ENCODE measurements at regions of chr19 and their contacts with region 1.

Region 1: GRCh38 chr19:2610637-2611482 is 91.6 kb downstream of the GNG7 start:
- H3K4me3 ChIP-seq: peak overlapping the region; percentile 35
- H3K27ac ChIP-seq: no peak overlapping the region
- H3K4me1 ChIP-seq: no peaks in the 10 kb centered on the region
- CTCF ChIP-seq: peak; percentile 95

Region 2: DNA sequence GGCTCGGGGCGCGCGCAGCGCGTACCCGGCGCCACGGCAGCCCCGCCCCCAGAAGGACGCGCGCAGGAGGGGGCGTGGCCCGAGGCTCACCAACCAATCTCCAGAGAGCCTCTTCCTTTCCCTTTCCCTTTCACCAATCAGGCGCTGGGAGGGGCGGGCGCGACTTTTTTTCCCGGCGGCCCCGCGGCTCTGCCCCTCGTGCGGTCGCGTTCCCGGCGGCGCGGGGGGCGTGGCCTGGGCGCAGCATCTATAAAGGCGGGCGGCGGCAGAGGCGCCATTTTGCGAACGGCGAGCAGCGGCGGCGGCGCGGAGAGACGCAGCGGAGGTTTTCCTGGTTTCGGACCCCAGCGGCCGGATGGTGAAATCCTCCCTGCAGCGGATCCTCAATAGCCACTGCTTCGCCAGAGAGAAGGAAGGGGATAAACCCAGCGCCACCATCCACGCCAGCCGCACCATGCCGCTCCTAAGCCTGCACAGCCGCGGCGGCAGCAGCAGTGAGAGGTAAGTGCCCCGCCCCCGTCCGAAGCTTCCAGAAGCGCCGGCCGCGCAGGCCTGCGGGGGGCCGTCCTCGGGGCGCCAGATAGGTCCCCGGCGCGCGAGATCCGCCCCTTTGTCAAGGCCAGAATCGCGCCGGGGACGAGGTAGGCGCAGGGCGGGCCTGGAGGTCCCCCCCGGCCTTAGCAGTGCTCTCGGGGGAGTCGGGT is 341.5 kb before region 1 on chr19:
- CTCF ChIA-PET with region 1: interaction called, 12 read pairs
- POLR2A ChIA-PET with region 1: no interaction called
- H3K4me3 ChIP-seq: peak overlapping the region; percentile 99
- H3K27ac ChIP-seq: peak overlapping the region; percentile 98
- H3K4me1 ChIP-seq: 0 out of 2 replicates have a peak, but pooled peaks cover 5% of the 10 kb centered on the region
- CTCF ChIP-seq: peak; percentile 47

Region 3: GRCh38 chr19:2469102-2469914 is 141.6 kb before region 1 on chr19:
- CTCF ChIA-PET with region 1: interaction called, 43 read pairs
- POLR2A ChIA-PET with region 1: interaction called, 11 read pairs
- H3K4me3 ChIP-seq: no peak overlapping the region
- H3K27ac ChIP-seq: no peak overlapping the region
- H3K4me1 ChIP-seq: no peaks in the 10 kb centered on the region
- CTCF ChIP-seq: no peak

Region 4: DNA sequence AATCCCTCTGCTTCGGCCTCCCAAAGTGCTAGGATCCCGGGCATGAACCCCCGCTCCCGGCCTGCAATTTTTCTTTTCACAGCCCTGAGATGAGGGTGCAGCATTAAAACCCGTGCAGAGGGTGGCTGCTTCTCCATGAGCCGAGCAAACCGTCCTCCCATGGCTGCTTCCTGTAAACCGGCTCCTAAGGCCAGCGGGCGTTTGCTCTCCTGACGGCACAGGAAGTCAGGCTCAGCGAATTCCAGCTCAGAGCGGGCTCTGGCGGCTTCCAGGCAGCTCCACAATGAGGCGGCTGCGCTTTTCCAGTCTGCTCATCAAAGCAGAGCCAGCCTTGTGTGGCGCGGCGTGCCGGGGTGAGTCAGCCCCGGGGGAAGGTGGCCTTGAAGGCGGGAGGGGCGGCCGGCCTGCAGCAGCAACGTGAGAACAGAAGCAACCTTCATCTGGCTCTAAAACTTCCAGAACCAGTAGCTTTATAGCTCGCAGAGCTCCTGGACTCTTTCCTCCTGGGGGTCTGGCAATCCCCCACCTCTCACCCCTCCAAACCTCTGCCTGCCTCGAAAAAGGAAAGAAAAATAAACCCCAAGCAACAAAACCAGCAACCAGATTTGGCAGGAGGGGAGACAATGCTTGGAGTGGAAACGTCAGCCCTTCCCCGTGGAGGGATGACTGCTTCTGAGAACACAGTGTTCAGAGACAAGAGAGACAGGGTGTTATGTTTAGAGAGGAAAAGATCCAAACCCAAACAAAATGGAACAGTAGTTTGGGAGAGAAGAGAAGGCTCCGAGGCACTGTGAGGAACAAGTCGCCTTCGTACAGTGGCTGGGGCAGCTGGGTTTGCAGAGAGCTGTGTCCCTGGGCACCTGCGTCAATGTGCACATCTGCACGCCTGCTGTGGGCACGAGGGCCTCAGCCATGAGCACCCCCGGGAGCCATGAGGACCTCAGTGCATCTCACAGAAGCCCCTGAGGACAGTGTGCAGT is 67.1 kb before region 1 on chr19:
- CTCF ChIA-PET with region 1: interaction called, 5 read pairs
- POLR2A ChIA-PET with region 1: interaction called, 21 read pairs
- H3K4me3 ChIP-seq: no peak overlapping the region; the same call in 1 of the 2 replicates
- H3K27ac ChIP-seq: peak overlapping the region; percentile 64
- H3K4me1 ChIP-seq: peaks cover 7% of the 10 kb centered on the region; the same call in 1 of the 2 replicates
- CTCF ChIP-seq: no peak

Region 5: DNA sequence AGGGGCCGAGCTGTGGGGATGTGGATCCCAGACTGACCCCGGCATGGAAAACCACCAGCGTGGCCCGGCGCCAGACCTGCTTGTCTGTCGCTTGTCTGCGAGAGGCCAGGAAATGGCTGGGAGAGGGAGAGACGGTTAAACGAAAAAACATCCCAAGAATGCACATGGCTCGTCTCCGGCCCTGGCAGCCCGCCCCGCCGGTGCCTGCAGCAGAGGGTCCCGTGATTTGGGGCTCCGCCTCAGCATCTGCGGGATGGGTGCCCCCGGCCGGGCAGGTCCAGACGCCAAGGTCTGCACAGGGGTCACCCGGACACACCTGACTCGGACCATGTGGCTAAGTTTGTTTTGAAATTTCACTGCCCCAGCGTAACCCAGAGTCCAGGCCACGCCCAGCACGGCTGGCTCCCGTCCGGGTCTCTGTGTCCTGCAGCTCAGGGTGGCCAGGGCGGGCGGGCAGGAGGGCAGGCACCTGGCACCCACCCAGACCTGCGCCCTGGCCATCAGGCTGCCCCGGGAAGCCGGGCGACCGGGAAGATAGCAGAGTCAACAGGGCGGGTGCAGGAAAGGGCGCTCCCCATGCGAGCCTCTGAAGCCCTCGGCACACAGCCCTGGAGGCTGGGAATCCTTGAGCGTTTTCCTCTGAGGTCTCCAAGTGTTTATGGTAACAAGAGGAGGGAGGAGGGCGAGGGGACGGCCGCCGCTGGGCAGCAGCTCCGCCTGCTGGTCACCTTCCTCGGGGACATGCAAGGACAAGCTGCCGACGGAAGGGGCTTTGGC is 31.8 kb before region 1 on chr19:
- CTCF ChIA-PET with region 1: interaction called, 22 read pairs
- POLR2A ChIA-PET with region 1: interaction called, 12 read pairs
- H3K4me3 ChIP-seq: peak overlapping the region; percentile 51
- H3K27ac ChIP-seq: peak overlapping the region; percentile 44; the same call in 1 of the 2 replicates
- H3K4me1 ChIP-seq: no peaks in the 10 kb centered on the region
- CTCF ChIP-seq: peak; percentile 96

Region 6: GRCh38 chr19:2627319-2627829 is 16.5 kb after region 1 on chr19:
- CTCF ChIA-PET with region 1: interaction called, 20 read pairs
- POLR2A ChIA-PET with region 1: interaction called, 3 read pairs
- H3K4me3 ChIP-seq: no peak overlapping the region
- H3K27ac ChIP-seq: no peak overlapping the region
- H3K4me1 ChIP-seq: no peaks in the 10 kb centered on the region
- CTCF ChIP-seq: no peak

Region 7: DNA sequence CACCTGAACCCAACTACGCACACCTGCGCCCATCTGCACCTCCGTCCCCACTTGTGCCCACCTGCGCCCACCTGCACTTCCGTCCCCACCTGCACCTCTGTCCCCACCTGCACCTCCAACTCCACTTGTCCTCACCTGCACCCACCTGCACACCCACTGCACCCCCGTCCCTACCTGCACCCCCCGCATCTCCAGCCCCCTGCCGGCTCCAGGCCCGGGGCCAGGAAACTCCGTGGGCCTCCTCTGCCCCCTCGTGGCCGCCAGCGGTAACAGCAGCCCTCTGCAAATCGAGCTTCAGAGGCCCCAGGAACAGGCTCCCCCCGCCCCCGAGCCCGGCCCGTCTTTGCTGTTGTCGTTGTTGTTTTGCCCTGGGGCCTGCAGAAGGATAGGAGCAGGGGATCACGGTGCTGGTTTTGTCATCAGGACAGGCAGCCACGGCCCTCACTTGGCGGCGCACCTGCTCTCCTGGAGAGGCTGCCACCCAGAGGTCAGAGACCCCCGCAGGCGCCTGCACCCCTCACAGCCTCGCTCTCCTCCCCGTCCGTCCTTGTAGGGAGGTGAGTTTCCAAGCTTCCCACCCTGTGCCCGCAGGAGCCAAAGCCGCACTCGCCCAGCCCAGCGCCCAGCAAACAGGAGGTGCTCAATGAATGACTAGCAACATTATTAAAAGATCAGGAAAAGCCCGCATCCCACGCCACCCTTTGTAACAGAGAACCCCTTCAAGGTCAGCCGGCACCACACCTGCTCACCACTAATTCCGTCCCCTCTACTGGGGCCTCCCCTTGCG is 26.2 kb after region 1 on chr19:
- CTCF ChIA-PET with region 1: interaction called, 19 read pairs
- POLR2A ChIA-PET with region 1: no interaction called
- H3K4me3 ChIP-seq: no peak overlapping the region
- H3K27ac ChIP-seq: no peak overlapping the region
- H3K4me1 ChIP-seq: no peaks in the 10 kb centered on the region
- CTCF ChIP-seq: peak; percentile 95